ENCODE measurements at regions of chr15 and their contacts with region 1.

Region 1: DNA sequence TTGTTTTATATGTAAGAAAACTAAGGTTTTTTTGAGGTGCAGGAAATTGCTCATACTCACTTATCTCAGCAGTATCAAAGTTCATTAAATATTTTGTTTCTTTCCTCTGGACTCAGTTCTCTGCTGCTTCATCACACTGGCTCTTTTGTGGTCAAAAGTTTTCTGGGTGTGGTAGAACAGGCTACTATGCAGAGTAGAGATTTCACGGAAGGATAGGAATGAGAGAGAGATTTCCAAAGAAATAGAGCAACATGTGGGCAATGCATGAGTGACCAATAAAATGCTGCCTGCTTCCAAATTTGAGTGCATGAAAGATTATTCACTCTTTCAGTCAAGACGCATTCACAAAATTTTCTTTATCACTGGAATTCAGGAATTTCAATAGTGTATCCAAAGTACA is 577.3 kb upstream of the SEMA6D start:
- DNase-seq: no peak
- ATAC-seq: no peak
- H3K4me3 ChIP-seq: no peak overlapping the region
- H3K27ac ChIP-seq: no peak overlapping the region
- H3K4me1 ChIP-seq: no peaks in the 10 kb centered on the region
- H3K27me3 ChIP-seq: no peaks in the 10 kb centered on the region
- CTCF ChIP-seq: no peak
- POLR2A ChIP-seq: no peak
- RAD21 ChIP-seq: no peak

Region 2: DNA sequence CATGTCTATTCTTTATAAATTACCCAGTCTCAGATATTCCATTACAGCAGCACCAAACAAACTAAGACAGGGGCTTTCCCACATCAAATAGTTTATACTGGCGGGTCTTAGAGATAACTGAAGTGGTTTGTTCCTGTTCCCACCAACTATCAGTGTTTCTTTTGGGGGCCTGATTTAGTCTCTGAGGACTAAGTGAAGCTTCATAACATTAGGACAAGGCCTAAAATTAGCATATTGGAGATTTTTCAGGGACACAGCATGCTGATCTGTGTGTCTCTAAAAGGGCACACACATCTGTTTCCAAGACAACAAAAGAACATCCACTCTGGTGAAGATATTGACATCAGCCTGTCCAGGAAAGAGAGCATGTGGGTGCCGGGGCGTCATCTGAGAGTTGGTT is 504.8 kb after region 1 on chr15:
- CTCF ChIA-PET with region 1: no interaction called
- POLR2A ChIA-PET with region 1: no interaction called
- RAD21 ChIA-PET with region 1: no interaction called
- intact Hi-C with region 1: loop called (anchors 10 kb)
- DNase-seq: no peak
- ATAC-seq: no peak
- H3K4me3 ChIP-seq: no peak overlapping the region
- H3K27ac ChIP-seq: no peak overlapping the region
- H3K4me1 ChIP-seq: no peaks in the 10 kb centered on the region
- H3K27me3 ChIP-seq: no peaks in the 10 kb centered on the region
- CTCF ChIP-seq: no peak
- POLR2A ChIP-seq: no peak
- RAD21 ChIP-seq: no peak

Measured in HCT116 (cell line).